ENCODE measurements at regions of chr22 and their contacts with region 1.

Region 1: GRCh38 chr22:40950962-40951794 is at the start of gene RBX1:
- DNase-seq: peak; percentile 98 to 100 (median 99)
- ATAC-seq: peak; percentile 80 to 82
- H3K4me3 Mint-ChIP-seq: peak within 1 kb of the TSS; percentile 97 to 100 (median 99)
- H3K27ac Mint-ChIP-seq: peak within 1 kb of the TSS; percentile 98 to 100 (median 99)
- H3K4me1 Mint-ChIP-seq: peaks cover 12 to 39% (median 32%) of the 10 kb centered on the region in 4 donors
- H3K27me3 Mint-ChIP-seq: peaks cover 0 to 2% (median 0%) of the 10 kb centered on the region in 5 donors
- polyA plus RNA-seq, gene RBX1: 134 to 152 (median 148) TPM

Region 2: GRCh38 chr22:40856513-40857308 is 94.5 kb before region 1 on chr22 and contains the starts of genes ST13 and XPNPEP3:
- POLR2A ChIA-PET with region 1: interaction called, 17 read pairs
- DNase-seq: peak; percentile 95 to 99 (median 97)
- ATAC-seq: peak; percentile 88 to 89
- H3K4me3 Mint-ChIP-seq: peak within 1 kb of the TSS; percentile 97 to 100 (median 99)
- H3K27ac Mint-ChIP-seq: peak within 1 kb of the TSS; percentile 98 to 100 (median 100)
- H3K4me1 Mint-ChIP-seq: peaks cover 9 to 69% (median 63%) of the 10 kb centered on the region in 4 donors
- H3K27me3 Mint-ChIP-seq: no peaks in the 10 kb centered on the region
- polyA plus RNA-seq, gene ST13: 244 to 283 (median 260) TPM
- polyA plus RNA-seq, gene XPNPEP3: 5.9 to 11.5 (median 7.1) TPM

Region 3: DNA sequence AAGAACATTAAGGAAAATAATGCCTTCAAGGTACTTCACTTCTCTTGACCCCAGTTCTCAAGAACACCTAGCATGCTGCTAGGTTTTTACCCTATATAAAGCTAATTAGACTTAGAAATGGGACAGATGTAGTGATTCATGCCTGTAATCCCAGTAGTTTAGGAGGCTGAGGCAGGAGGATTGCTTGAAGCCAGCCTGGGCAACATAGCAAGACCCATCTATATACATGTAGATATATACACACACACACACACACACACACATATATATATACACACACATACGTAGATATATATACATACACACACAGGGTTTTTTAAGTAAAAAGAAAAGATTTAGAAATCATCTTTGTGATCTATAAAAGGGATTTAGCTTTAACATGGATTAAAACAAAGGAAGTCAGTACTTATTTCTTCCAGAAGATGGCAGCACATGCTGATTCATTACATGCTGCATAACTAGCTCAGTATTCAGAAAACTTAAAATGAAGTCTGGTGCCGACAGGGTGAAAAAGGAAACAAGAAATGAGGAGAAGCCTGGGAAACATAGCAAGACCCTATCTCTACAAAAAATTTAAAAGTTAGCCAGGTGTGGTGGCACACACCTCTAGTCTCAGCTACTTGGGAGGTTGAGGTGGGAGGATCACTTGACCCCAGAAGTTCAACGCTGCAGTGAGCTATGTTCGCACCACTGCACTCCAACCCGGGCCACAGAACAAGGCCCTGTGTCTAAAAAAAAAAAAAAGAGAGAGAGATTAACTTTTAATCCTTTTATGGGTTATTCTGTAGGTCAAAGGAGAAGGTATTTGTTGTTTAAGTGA is 28.5 kb before region 1 on chr22:
- POLR2A ChIA-PET with region 1: interaction called, 23 read pairs
- DNase-seq: peak in 7 of 10 donors; percentile 5 to 75 (median 44)
- ATAC-seq: peak; percentile 89 to 94
- H3K4me3 Mint-ChIP-seq: peak overlapping the region in 9 of 10 donors; percentile 2 to 56 (median 28)
- H3K27ac Mint-ChIP-seq: peak overlapping the region; percentile 15 to 91 (median 76)
- H3K4me1 Mint-ChIP-seq: peaks cover 3 to 8% (median 4%) of the 10 kb centered on the region in 4 donors
- H3K27me3 Mint-ChIP-seq: no peaks in the 10 kb centered on the region

Region 4: DNA sequence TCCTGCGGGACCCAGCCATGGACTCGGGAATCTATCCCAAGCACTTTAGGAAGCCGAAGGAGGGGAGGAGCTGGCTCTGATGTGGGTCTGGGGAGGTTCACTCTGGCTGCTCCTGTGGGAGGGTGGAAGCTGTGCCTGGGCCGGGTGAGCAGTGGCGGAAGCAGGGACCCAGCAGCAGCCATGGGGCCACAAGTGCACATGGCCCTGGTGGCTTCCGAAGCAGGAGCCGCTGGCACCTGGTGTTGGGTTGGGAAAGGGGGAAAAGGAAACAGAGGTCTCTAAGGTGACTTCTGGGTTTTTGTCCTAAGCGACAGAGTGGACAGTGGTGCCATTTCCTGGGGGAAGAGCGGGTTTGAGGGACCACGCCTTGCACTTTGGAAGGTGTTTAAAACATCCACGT is 39.3 kb after region 1 on chr22:
- POLR2A ChIA-PET with region 1: no interaction called
- DNase-seq: peak in 1 of 10 donors; percentile 22
- ATAC-seq: no peak
- H3K4me3 Mint-ChIP-seq: no peak overlapping the region
- H3K27ac Mint-ChIP-seq: peak overlapping the region in 1 of 10 donors; percentile 8
- H3K4me1 Mint-ChIP-seq: no peaks in the 10 kb centered on the region
- H3K27me3 Mint-ChIP-seq: peaks cover 0 to 24% (median 10%) of the 10 kb centered on the region in 5 donors

Region 5: DNA sequence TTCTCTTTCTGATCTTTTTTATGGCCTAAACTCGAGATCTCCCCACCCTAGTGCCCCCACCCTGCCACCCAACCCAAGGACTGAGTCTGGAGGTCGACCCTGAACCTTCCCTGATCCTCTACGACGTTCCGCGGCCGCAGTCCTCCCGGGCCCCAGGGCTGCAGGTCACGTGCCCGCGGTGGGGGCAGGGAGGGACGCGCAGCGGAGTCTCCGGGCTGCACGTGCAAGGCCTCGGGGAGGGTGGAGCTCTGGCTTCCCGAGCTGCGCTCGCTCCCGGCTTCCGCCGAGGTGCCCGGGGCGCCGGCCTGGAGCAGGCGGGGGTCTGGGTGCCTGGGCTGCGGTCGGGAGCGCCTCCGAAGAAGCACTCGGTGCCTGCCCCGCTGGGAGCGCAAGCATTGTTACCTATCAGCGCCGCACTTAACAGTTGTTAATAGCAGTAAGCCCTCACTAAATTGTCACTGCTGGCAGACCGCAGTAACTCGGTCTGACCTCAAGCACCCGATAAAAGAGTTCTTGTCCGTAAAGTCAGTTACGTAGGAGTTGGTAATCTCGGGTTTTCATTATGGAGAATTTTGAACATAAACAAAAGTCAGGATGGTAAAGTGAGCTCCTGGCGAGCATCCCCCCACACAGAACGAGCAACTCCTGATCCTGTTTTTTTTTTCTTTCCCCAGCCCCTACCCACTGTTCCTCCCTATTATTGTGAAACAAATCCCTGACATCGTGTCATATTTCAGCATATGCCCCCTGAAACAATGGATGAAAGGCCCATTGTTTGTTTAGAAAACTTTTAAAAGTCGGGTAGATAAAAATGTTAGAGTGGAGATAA is 71.5 kb after region 1 on chr22:
- POLR2A ChIA-PET with region 1: interaction called, 43 read pairs
- DNase-seq: peak; percentile 64 to 86 (median 76)
- ATAC-seq: peak; percentile 80 to 86
- H3K4me3 Mint-ChIP-seq: peak overlapping the region; percentile 61 to 89 (median 84)
- H3K27ac Mint-ChIP-seq: peak overlapping the region in 9 of 10 donors; percentile 32 to 92 (median 83)
- H3K4me1 Mint-ChIP-seq: peaks cover 4 to 24% (median 19%) of the 10 kb centered on the region in 4 donors
- H3K27me3 Mint-ChIP-seq: no peaks in the 10 kb centered on the region

Measured in naive thymus-derived CD8-positive, alpha-beta T cell (primary cell).